ENCODE measurements at regions of chr2 and their contacts with region 1.

Region 1: GRCh38 chr2:165401285-165401852 is 68.1 kb upstream of the CSRNP3 start:
- DNase-seq: peak in 1 of 2 donors; percentile 73
- ATAC-seq: peak; percentile 50 to 69 (median 68)
- H3K4me3 ChIP-seq: no peak overlapping the region
- H3K4me3 Mint-ChIP-seq: no peak overlapping the region
- H3K27ac ChIP-seq: no peak overlapping the region
- H3K27ac Mint-ChIP-seq: no peak overlapping the region
- H3K4me1 ChIP-seq: no peaks in the 10 kb centered on the region
- H3K4me1 Mint-ChIP-seq: peaks cover 6 to 8% of the 10 kb centered on the region in 2 donors
- H3K27me3 ChIP-seq: no peaks in the 10 kb centered on the region
- H3K27me3 Mint-ChIP-seq: peaks cover 5 to 22% of the 10 kb centered on the region in 2 donors
- CTCF ChIP-seq: peak; percentile 84

Region 2: GRCh38 chr2:164981217-164981990 is 420.0 kb before region 1 on chr2:
- intact Hi-C with region 1: no loop called
- DNase-seq: no peak
- ATAC-seq: no peak
- H3K4me3 ChIP-seq: no peak overlapping the region
- H3K4me3 Mint-ChIP-seq: no peak overlapping the region
- H3K27ac ChIP-seq: no peak overlapping the region
- H3K27ac Mint-ChIP-seq: no peak overlapping the region
- H3K4me1 ChIP-seq: peaks cover 8% of the 10 kb centered on the region
- H3K4me1 Mint-ChIP-seq: peaks cover 18 to 20% of the 10 kb centered on the region in 2 donors
- H3K27me3 ChIP-seq: no peaks in the 10 kb centered on the region
- H3K27me3 Mint-ChIP-seq: peaks cover 0 to 2% of the 10 kb centered on the region in 2 donors
- CTCF ChIP-seq: no peak

Region 3: GRCh38 chr2:165698444-165698894 is 297.1 kb after region 1 on chr2:
- intact Hi-C with region 1: loop called (anchors 5 kb)
- DNase-seq: peak in 1 of 2 donors; percentile 13
- ATAC-seq: peak in 2 of 3 donors; percentile 47 to 78
- H3K4me3 ChIP-seq: no peak overlapping the region
- H3K4me3 Mint-ChIP-seq: no peak overlapping the region
- H3K27ac ChIP-seq: no peak overlapping the region
- H3K27ac Mint-ChIP-seq: no peak overlapping the region
- H3K4me1 ChIP-seq: no peaks in the 10 kb centered on the region
- H3K4me1 Mint-ChIP-seq: no peaks in the 10 kb centered on the region
- H3K27me3 ChIP-seq: no peaks in the 10 kb centered on the region
- H3K27me3 Mint-ChIP-seq: peaks cover 2 to 19% of the 10 kb centered on the region in 2 donors
- CTCF ChIP-seq: no peak

Region 4: DNA sequence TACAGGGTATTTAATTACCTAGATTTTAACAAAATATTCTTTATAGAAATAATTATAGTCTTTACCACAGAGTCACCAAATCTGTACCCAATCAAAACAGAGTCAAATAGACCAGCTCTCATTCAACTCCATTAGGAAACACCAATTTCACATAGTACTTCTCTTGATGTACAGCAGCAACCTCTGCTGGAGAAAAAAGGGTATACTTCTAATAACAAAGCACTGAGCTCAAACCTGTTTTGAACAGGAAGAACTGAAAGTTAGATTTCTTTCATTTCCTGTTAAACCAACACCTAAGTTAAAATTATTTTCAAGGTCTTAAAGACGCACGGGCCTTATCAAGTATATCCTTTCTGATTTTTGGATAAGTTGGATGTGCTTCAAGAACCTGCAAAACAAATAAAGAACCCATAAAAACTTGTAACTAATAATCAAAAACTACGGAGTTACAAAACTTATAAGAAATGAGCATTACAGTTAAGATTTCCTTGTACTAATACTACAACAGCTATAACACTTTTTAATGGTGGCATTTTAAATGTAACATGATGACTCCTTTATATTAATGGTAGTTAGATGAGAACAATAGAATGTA is 473.2 kb after region 1 on chr2:
- intact Hi-C with region 1: loop called (anchors 1 kb)
- DNase-seq: peak in 1 of 2 donors; percentile 75
- ATAC-seq: peak; percentile 87 to 95 (median 91)
- H3K4me3 ChIP-seq: no peak overlapping the region
- H3K4me3 Mint-ChIP-seq: peak overlapping the region; percentile 13
- H3K27ac ChIP-seq: no peak overlapping the region
- H3K27ac Mint-ChIP-seq: peak overlapping the region; percentile 49 to 57
- H3K4me1 ChIP-seq: peaks cover 2% of the 10 kb centered on the region
- H3K4me1 Mint-ChIP-seq: peaks cover 26 to 28% of the 10 kb centered on the region in 2 donors
- H3K27me3 ChIP-seq: no peaks in the 10 kb centered on the region
- H3K27me3 Mint-ChIP-seq: no peaks in the 10 kb centered on the region
- CTCF ChIP-seq: peak; percentile 87

Region 5: GRCh38 chr2:166127217-166128155 is 726.1 kb after region 1 on chr2 and contains the start of gene SCN1A:
- intact Hi-C with region 1: loop called (anchors 5 kb)
- DNase-seq: peak in 1 of 2 donors; percentile 55
- ATAC-seq: peak in 1 of 3 donors; percentile 39
- H3K4me3 ChIP-seq: no peak within 1 kb of the TSS
- H3K4me3 Mint-ChIP-seq: no peak within 1 kb of the TSS
- H3K27ac ChIP-seq: no peak within 1 kb of the TSS
- H3K27ac Mint-ChIP-seq: no peak within 1 kb of the TSS
- H3K4me1 ChIP-seq: no peaks in the 10 kb centered on the region
- H3K4me1 Mint-ChIP-seq: peaks cover 0 to 5% of the 10 kb centered on the region in 2 donors
- H3K27me3 ChIP-seq: no peaks in the 10 kb centered on the region
- H3K27me3 Mint-ChIP-seq: peaks cover 8 to 24% of the 10 kb centered on the region in 2 donors
- CTCF ChIP-seq: peak; percentile 73
- total RNA-seq, gene SCN1A: not detected